Posterior cingulate gyrus (tissue), 11 donors: ENCODE measurements at regions of chr3 and their contacts with region 1.

Region 1: DNA sequence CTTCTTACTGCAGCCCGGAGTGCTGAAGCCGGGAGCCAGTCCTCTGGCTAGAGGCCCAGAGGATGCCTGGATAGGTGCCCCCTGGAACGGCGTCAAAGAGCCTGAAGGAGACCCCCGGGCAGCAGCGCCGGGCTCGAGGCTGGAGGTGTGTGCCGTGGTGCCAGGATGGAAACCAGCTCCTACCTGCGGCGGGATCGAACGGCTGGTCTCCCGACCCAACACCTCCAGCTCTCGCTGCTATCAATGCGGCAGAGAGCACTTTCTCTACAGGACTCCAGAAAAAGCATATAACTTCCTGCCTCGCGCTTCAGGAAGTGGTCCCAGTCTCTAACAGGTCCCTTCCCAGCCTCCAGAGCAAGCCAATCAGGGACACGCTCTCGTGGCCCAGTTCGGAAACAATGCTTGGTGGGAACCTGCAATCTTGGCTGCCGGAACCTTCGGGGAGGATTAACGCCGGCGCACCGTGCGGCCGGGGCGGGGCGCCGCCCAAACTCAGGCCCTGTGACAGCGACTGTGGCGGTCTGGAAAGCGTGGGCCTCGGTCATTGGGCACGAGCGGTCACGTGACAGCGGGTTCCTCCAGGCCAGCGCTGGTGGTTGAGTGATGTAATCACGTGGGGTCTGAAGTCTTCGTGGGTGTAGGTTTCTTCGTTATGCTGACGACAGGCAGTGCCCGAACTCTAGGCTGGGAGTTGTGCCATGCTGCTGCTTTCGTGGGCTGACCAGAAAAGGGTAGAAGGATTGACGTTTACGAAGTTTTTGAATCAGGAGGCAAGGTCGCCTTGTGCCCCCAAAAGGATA is at the start of gene SLC33A1:
- DNase-seq: peak; percentile 99 to 100 (median 100)

Region 2: GRCh38 chr3:155805802-155806618 is 48.3 kb before region 1 on chr3 and contains the start of gene C3orf33:
- intact Hi-C with region 1: loop called (anchors 5 kb)
- DNase-seq: peak; percentile 46 to 96 (median 71)

Region 3: DNA sequence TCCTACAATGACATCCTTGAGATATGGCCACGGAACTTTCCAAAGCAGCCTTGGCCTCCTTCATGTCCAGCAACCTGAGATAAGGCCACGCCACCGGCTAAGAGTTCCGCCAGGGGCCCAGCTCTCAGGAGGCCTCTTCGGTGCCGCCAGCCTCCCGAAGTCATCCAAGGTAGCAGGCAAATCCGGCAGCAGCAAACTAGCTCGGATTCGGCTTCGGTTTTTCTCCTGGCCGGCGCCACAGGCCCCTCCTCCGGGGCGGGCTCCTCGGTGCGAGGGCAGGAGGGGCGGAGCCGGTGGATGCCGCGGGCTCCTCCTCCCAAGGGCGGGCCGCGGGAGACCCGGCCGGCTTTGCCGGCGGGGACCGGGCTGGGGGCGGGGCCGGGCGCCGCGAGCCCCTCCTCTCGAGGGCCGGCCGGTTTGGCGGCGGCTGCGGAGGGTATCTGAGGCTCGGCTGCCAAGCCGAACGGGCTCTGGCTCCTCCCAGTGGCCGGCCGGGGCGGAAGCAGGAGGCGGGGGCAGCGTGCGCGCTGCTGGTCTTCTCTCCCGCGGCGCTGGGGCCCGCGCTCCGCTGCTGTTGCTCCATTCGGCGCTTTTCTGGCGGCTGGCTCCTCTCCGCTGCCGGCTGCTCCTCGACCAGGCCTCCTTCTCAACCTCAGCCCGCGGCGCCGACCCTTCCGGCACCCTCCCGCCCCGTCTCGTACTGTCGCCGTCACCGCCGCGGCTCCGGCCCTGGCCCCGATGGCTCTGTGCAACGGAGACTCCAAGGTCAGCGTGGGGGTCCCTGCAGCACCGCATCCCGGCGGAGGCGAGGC is 16.0 kb after region 1 on chr3 and contains the start of gene GMPS:
- intact Hi-C with region 1: loop called (anchors 1 kb)
- DNase-seq: peak; percentile 85 to 99 (median 94)